ENCODE measurements at regions of chr21 and their contacts with region 1.

Region 1: GRCh38 chr21:35256467-35256988 is 207.4 kb upstream of the RUNX1 start:
- DNase-seq: peak; percentile 91 to 97
- ATAC-seq: peak; percentile 89 to 95 (median 90)
- H3K4me3 ChIP-seq: peak overlapping the region; percentile 27
- H3K27ac ChIP-seq: peak overlapping the region; percentile 97
- H3K4me1 ChIP-seq: peaks cover 53% of the 10 kb centered on the region
- H3K27me3 ChIP-seq: no peaks in the 10 kb centered on the region
- CTCF ChIP-seq: no peak

Region 2: DNA sequence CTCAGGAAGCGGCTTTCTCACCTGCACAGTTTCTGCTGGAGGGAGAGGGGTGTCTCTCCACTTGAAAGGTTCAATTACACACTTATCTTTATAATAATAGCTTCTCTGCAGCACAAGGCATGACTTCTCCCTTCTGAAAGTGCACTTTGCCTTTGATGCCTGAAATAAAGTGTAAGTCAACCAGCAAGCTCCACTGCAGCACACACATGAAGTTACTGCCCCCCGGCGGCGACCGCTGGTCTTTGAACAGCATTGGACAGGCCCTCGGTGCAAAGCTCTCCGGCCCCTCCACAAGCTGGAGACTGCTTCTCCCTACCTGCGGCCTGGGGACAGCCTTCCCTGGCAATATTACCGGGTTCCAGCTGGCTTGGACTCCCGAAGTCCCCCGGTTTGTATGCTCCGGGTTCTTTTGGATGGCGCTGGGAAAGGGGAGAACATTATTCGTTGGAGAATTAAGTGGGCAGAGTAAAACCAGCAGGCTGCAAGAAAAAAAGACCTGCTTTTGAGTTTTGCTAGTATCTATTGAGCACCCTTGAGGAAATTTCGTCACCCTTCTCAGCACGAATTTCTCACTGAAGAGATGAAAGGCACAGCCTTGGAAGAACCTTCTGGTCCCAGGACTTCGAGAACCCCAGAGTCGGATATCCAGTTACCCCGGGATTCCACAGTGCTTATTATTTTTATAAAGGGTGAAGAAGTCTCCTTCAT is 653.4 kb before region 1 on chr21:
- intact Hi-C with region 1: no loop called
- DNase-seq: peak; percentile 84 to 87
- ATAC-seq: peak; percentile 84 to 97 (median 94)
- H3K4me3 ChIP-seq: no peak overlapping the region
- H3K27ac ChIP-seq: no peak overlapping the region
- H3K4me1 ChIP-seq: no peaks in the 10 kb centered on the region
- H3K27me3 ChIP-seq: no peaks in the 10 kb centered on the region
- CTCF ChIP-seq: peak; percentile 72

Region 3: GRCh38 chr21:35204850-35205541 is 51.5 kb before region 1 on chr21:
- intact Hi-C with region 1: loop called (anchors 5 to 10 kb)
- DNase-seq: peak; percentile 70 to 72
- ATAC-seq: peak in 1 of 4 donors; percentile 7
- H3K4me3 ChIP-seq: peak overlapping the region; percentile 29
- H3K27ac ChIP-seq: peak overlapping the region; percentile 85
- H3K4me1 ChIP-seq: peaks cover 61% of the 10 kb centered on the region
- H3K27me3 ChIP-seq: no peaks in the 10 kb centered on the region
- CTCF ChIP-seq: no peak

Region 4: DNA sequence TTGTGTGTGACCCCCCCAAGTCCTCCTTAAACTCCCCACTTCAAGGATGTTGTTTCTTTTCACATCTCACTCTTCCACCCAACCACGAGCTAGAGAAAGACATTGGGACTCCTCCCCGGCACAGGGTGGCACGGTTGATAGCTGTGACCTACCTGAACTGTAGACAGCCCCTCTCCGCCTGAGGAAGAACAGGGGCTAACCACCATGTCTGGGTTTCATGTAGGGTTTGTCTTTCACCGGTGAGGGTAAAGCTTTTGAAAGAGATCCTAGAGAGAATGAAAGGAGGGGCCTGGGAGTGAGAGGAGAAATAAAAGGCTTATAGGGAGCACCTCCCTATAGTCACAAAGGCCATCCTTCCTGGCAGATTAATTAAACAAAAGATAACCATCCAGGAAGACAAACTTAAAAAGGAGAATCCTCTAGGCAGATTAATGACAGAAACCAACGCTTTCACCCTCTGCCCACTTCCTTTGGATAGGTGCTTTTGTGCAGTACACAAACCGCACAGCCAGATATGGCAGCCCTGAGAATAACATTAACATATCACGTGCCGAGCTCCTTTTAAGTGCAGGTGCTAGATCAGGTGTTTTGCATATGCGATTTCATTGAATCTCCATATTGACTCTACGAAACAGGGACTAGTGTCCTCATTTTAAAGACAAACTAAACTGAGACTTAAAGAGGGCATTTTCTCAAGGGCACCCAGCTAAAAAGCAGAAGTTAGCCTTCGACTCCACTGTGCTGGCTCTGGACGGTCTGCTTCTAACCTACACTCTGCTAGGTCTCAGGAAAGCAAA is 29.4 kb before region 1 on chr21:
- intact Hi-C with region 1: loop called in 1 of 2 experiments (anchors 1 kb)
- DNase-seq: no peak
- ATAC-seq: peak; percentile 9 to 34 (median 23)
- H3K4me3 ChIP-seq: peak overlapping the region; percentile 47
- H3K27ac ChIP-seq: peak overlapping the region; percentile 93
- H3K4me1 ChIP-seq: peaks cover 59% of the 10 kb centered on the region
- H3K27me3 ChIP-seq: no peaks in the 10 kb centered on the region
- CTCF ChIP-seq: no peak

Region 5: GRCh38 chr21:35366394-35367080 is 110.0 kb after region 1 on chr21:
- intact Hi-C with region 1: loop called (anchors 1 to 10 kb)
- DNase-seq: no peak
- ATAC-seq: peak; percentile 89 to 94 (median 92)
- H3K4me3 ChIP-seq: no peak overlapping the region
- H3K27ac ChIP-seq: peak overlapping the region; percentile 89
- H3K4me1 ChIP-seq: peaks cover 22% of the 10 kb centered on the region
- H3K27me3 ChIP-seq: no peaks in the 10 kb centered on the region
- CTCF ChIP-seq: no peak

Region 6: GRCh38 chr21:35390013-35390776 is 133.7 kb after region 1 on chr21:
- intact Hi-C with region 1: loop called in 1 of 2 experiments (anchors 5 kb)
- DNase-seq: no peak
- ATAC-seq: peak; percentile 72 to 83 (median 77)
- H3K4me3 ChIP-seq: no peak overlapping the region
- H3K27ac ChIP-seq: peak overlapping the region; percentile 59
- H3K4me1 ChIP-seq: no peaks in the 10 kb centered on the region
- H3K27me3 ChIP-seq: no peaks in the 10 kb centered on the region
- CTCF ChIP-seq: no peak

Measured in psoas muscle (tissue), 8 donors.